Gastrocnemius medialis (tissue), 4 donors: ENCODE measurements at regions of chr2 and their contacts with region 1.

Region 1: GRCh38 chr2:57497489-57498096 is 549.0 kb upstream of the VRK2 start:
- DNase-seq: no peak
- ATAC-seq: no peak
- H3K4me3 ChIP-seq: no peak overlapping the region
- H3K27ac ChIP-seq: no peak overlapping the region
- H3K4me1 ChIP-seq: peaks cover 0 to 6% of the 10 kb centered on the region in 2 donors
- H3K27me3 ChIP-seq: no peaks in the 10 kb centered on the region
- CTCF ChIP-seq: peak in 4 of 5 experiments; percentile 35 to 68 (median 57)
- POLR2A ChIP-seq: no peak

Region 2: GRCh38 chr2:57376985-57377384 is 120.6 kb before region 1 on chr2:
- in situ Hi-C with region 1: no loop called
- intact Hi-C with region 1: loop called (anchors 10 kb)
- DNase-seq: no peak
- ATAC-seq: no peak
- H3K4me3 ChIP-seq: no peak overlapping the region
- H3K27ac ChIP-seq: no peak overlapping the region
- H3K4me1 ChIP-seq: peaks cover 0 to 3% of the 10 kb centered on the region in 2 donors
- H3K27me3 ChIP-seq: no peaks in the 10 kb centered on the region
- CTCF ChIP-seq: no peak
- POLR2A ChIP-seq: no peak